Mammary epithelial cell (primary cell): ENCODE measurements at regions of chr22 and their contacts with region 1.

Region 1: GRCh38 chr22:41762980-41763779 is 37.3 kb upstream of the CCDC134 start:
- DNase-seq: peak; percentile 63
- H3K4me3 ChIP-seq: no peak overlapping the region
- H3K27ac ChIP-seq: no peak overlapping the region
- H3K4me1 ChIP-seq: peaks cover 12% of the 10 kb centered on the region
- H3K27me3 ChIP-seq: no peaks in the 10 kb centered on the region
- CTCF ChIP-seq: peak; percentile 43 to 55

Region 2: GRCh38 chr22:41656556-41656955 is 106.6 kb before region 1 on chr22:
- CTCF ChIA-PET with region 1: no interaction called
- dilution Hi-C with region 1: loop called (anchors 5 kb)
- in situ Hi-C with region 1: no loop called
- intact Hi-C with region 1: no loop called
- DNase-seq: no peak
- H3K4me3 ChIP-seq: no peak overlapping the region
- H3K27ac ChIP-seq: no peak overlapping the region
- H3K4me1 ChIP-seq: no peaks in the 10 kb centered on the region
- H3K27me3 ChIP-seq: no peaks in the 10 kb centered on the region
- CTCF ChIP-seq: no peak

Region 3: GRCh38 chr22:41713004-41713403 is 50.2 kb before region 1 on chr22:
- CTCF ChIA-PET with region 1: no interaction called
- dilution Hi-C with region 1: no loop called
- in situ Hi-C with region 1: no loop called
- intact Hi-C with region 1: no loop called
- DNase-seq: no peak
- H3K4me3 ChIP-seq: no peak overlapping the region
- H3K27ac ChIP-seq: no peak overlapping the region
- H3K4me1 ChIP-seq: no peaks in the 10 kb centered on the region
- H3K27me3 ChIP-seq: no peaks in the 10 kb centered on the region
- CTCF ChIP-seq: no peak

Region 4: GRCh38 chr22:41725510-41726110 is 37.6 kb before region 1 on chr22:
- CTCF ChIA-PET with region 1: no interaction called
- dilution Hi-C with region 1: no loop called
- in situ Hi-C with region 1: no loop called
- intact Hi-C with region 1: no loop called
- DNase-seq: no peak
- H3K4me3 ChIP-seq: no peak overlapping the region
- H3K27ac ChIP-seq: no peak overlapping the region
- H3K4me1 ChIP-seq: no peaks in the 10 kb centered on the region
- H3K27me3 ChIP-seq: no peaks in the 10 kb centered on the region
- CTCF ChIP-seq: no peak